ENCODE measurements at regions of chr14 and their contacts with region 1.

Region 1: GRCh38 chr14:78933948-78934524 is 763.9 kb downstream of the NRXN3 start:
- DNase-seq: peak; percentile 30
- CTCF ChIP-seq: peak; percentile 13

Region 2: GRCh38 chr14:78950649-78951048 is 16.6 kb after region 1 on chr14:
- CTCF ChIA-PET with region 1: interaction called, 11 read pairs
- POLR2A ChIA-PET with region 1: no interaction called
- DNase-seq: no peak
- CTCF ChIP-seq: no peak

Region 3: DNA sequence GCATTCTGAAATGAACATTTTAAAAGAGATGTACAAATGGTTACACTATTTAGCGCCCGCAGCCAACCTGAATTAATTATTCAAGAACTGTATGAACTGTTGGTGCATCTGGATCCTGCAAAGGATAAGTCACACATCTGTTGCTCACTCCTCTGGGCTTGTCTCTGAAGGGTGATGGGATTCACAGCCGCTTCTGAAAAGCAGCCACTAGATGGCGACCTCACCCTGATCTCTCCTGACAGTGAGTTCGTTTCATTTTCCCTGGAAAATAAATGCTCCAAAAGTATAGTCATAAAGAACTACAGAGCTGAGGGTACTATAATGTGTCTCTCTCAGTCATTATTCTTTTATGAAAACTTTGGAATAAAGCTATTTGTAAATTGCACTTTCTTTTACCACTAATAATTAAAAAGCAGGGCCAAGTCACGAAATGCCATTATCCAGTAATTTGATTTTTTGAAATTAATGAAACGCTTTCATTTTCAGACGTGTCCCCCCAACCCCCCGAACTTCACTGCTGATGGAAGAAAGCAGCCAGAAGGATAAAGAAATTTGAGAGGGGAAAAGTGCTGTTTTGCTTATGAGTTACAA is 25.7 kb after region 1 on chr14:
- CTCF ChIA-PET with region 1: interaction called, 13 read pairs
- POLR2A ChIA-PET with region 1: no interaction called
- DNase-seq: peak; percentile 53
- CTCF ChIP-seq: peak; percentile 89